IMR-90 (cell line): ENCODE measurements at regions of chr12 and their contacts with region 1.

Region 1: GRCh38 chr12:109264095-109264942 is 44.8 kb downstream of the FOXN4 start:
- DNase-seq: peak; percentile 41
- ATAC-seq: peak; percentile 87
- H3K4me3 ChIP-seq: no peak overlapping the region
- H3K27ac ChIP-seq: no peak overlapping the region
- H3K4me1 ChIP-seq: no peaks in the 10 kb centered on the region
- H3K27me3 ChIP-seq: no peaks in the 10 kb centered on the region
- CTCF ChIP-seq: peak; percentile 57
- POLR2A ChIP-seq: no peak
- RAD21 ChIP-seq: peak; percentile 57

Region 2: DNA sequence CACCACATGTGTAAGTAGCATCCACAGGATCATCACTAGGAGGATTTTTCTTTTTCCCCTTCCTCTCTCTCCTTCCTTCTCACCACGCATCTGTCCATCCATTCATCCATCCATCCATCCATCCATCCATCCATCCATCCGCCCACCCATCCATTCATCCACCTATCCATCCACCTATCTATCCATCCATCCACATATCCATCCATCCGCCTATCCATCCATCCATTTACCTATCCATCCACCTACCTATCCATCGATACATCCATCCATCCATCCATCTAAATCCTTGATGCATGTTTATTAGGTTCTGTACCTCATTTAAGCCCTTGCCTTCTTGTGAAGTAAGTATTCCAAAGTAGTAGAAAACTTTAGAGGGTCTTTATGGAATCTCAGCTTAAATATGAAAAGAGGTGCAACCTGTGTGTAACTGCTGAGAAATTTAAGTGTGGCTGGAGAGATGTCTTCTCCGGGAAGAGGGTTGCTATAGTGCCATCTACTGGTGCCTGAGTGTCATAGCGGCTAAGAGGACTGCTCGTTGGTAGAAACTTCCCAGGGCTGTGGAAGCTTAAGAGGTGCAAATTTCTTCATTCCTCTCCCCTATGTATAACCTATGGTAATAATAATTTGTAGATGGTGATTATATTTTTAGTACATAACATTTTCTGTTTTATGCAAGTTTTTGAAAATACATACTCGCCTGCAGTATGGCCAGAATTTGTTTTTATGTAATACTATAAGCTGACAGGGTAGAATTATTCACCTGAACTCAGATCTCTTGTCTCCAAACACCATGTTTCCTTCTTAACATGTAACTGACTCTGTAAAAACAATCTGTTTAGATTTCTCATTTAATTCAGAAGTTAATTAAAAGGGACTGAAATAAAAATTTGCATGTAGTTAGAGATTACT is 129.4 kb after region 1 on chr12:
- CTCF ChIA-PET with region 1: interaction called, 13 read pairs
- POLR2A ChIA-PET with region 1: no interaction called
- dilution Hi-C with region 1: no loop called
- in situ Hi-C with region 1: loop called (anchors 5 kb)
- intact Hi-C with region 1: no loop called
- DNase-seq: peak; percentile 53
- ATAC-seq: peak; percentile 95
- H3K4me3 ChIP-seq: no peak overlapping the region
- H3K27ac ChIP-seq: no peak overlapping the region
- H3K4me1 ChIP-seq: no peaks in the 10 kb centered on the region
- H3K27me3 ChIP-seq: peaks cover 9% of the 10 kb centered on the region; the same call in 1 of the 2 replicates
- CTCF ChIP-seq: peak; percentile 76
- POLR2A ChIP-seq: no peak
- RAD21 ChIP-seq: peak; percentile 54